Aorta (tissue), 5 donors: ENCODE measurements at regions of chr6 and their contacts with region 1.

Region 1: GRCh38 chr6:1609648-1610496 is at the start of gene FOXC1:
- DNase-seq: peak; percentile 94 to 97
- ATAC-seq: peak; percentile 87
- H3K4me3 ChIP-seq: peak within 1 kb of the TSS; percentile 100
- H3K27ac ChIP-seq: peak within 1 kb of the TSS; percentile 99 to 100
- H3K4me1 ChIP-seq: no peaks in the 10 kb centered on the region
- H3K27me3 ChIP-seq: no peaks in the 10 kb centered on the region
- total RNA-seq, gene FOXC1: 88.8 to 134 TPM

Region 2: DNA sequence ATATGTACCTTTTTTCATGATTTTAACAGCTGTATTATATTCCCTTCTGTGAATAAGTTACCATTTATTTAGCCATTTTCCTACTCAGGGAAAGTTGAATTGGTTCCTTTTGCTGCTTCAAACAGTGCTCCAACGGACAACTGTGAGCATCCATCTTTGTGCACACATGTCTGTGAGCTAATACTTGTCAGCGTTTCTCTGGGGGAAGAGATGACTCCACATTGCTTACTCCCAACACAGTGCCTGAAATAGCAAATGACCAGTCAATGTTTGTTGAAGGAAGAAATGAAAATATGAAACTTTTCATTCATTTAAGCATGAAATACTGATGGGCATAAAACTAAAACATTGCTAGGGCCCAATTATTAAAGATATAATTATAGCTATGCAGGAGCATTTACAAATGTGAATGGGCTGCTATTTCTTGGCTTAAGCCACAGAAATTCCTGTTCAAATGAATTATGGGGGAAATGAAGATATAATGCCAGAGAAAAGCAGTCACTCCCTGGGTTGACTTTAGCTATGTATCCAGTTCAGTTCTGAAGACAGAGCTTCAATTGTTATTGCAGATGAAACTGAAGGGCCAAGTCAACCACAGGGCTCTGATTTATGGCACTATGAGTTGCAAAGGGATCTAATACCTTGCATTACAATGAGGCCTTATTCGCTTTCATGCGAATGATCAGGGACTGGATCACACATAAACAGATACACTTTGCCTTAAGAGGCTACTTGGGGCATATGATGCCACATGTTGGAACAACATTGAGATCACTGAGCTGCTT is 47.5 kb before region 1 on chr6:
- intact Hi-C with region 1: no loop called
- DNase-seq: no peak
- ATAC-seq: no peak
- H3K4me3 ChIP-seq: no peak overlapping the region
- H3K27ac ChIP-seq: no peak overlapping the region
- H3K4me1 ChIP-seq: no peaks in the 10 kb centered on the region
- H3K27me3 ChIP-seq: no peaks in the 10 kb centered on the region

Region 3: GRCh38 chr6:1657116-1657770 is 47.4 kb after region 1 on chr6:
- intact Hi-C with region 1: no loop called
- DNase-seq: peak in 1 of 2 donors; percentile 23
- ATAC-seq: no peak
- H3K4me3 ChIP-seq: no peak overlapping the region
- H3K27ac ChIP-seq: no peak overlapping the region
- H3K4me1 ChIP-seq: no peaks in the 10 kb centered on the region
- H3K27me3 ChIP-seq: no peaks in the 10 kb centered on the region

Region 4: GRCh38 chr6:2037237-2037926 is 427.5 kb after region 1 on chr6:
- intact Hi-C with region 1: loop called in 1 of 2 experiments (anchors 5 kb)
- DNase-seq: no peak
- ATAC-seq: no peak
- H3K4me3 ChIP-seq: no peak overlapping the region
- H3K27ac ChIP-seq: peak overlapping the region in 1 of 2 donors; percentile 40
- H3K4me1 ChIP-seq: no peaks in the 10 kb centered on the region
- H3K27me3 ChIP-seq: no peaks in the 10 kb centered on the region

Region 5: DNA sequence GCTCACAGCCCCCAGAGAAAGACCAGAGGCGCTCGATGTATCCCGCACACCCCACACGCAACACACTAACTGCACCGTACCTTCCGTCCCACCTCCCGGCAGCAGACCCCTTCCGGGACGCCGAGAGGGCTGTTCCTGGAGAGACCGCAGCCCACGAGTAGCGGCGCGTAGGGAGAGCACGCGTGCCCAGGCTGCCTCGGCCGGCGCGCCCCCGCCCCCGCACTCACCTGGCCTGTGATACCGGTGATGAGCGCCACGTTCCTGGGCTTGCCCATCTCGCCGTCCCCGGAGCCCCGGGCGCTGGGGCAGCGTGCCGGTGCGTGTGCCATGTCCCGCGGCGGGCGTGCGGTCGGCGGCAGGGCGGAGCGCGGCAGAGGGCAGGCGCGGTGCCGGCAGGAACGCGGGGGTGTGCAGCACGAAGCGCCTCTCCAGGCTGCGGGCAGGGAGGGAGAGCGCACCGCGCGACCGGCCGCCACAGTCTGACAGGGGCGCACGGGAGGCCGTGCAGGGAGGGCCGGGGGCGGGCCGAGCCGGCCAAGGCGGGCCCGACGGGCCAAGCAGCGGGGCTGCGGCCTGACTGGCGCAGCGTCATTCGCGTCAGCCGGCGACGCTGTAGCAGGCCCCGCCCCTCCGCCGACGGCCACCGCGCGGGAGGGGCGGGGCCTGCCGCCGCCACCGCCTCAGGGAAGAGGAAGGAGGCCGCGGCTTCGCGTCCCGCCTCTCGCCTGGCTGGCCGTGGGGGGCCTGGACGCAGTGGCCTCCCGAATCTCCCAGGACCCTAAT is 635.4 kb after region 1 on chr6 and contains the start of gene GMDS:
- intact Hi-C with region 1: loop called in 1 of 2 experiments (anchors 5 kb)
- DNase-seq: peak; percentile 91 to 94
- ATAC-seq: peak; percentile 98
- H3K4me3 ChIP-seq: peak within 1 kb of the TSS; percentile 95 to 97
- H3K27ac ChIP-seq: peak within 1 kb of the TSS; percentile 68 to 91
- H3K4me1 ChIP-seq: no peaks in the 10 kb centered on the region
- H3K27me3 ChIP-seq: no peaks in the 10 kb centered on the region
- total RNA-seq, gene GMDS: 66.1 to 67.1 TPM

Region 6: DNA sequence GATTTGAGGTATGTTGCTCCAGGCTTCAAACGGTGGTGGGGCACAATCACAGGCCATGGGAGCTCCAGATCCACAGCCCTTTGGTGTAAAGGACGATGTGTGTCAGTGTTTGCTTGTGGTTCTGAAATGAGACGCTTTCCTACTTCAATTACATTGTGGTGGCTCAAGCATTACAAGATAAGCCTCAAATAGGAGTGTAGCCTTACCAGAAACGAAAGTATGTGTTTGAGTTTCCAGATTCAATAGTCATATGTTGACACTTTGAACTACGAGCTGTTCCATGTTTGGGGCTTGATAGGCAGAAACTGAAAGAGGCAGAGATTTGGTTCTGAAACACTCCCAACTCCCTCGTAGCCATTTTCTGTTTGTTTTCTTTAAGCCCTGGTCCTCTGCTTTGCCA is 953.8 kb after region 1 on chr6:
- intact Hi-C with region 1: loop called in 1 of 2 experiments (anchors 5 kb)
- DNase-seq: no peak
- ATAC-seq: peak; percentile 31
- H3K4me3 ChIP-seq: peak overlapping the region in 1 of 2 donors; percentile 48
- H3K27ac ChIP-seq: peak overlapping the region; percentile 45 to 93
- H3K4me1 ChIP-seq: peaks cover 0 to 3% of the 10 kb centered on the region in 2 donors
- H3K27me3 ChIP-seq: no peaks in the 10 kb centered on the region